ENCODE measurements at regions of chr18 and their contacts with region 1.

Region 1: DNA sequence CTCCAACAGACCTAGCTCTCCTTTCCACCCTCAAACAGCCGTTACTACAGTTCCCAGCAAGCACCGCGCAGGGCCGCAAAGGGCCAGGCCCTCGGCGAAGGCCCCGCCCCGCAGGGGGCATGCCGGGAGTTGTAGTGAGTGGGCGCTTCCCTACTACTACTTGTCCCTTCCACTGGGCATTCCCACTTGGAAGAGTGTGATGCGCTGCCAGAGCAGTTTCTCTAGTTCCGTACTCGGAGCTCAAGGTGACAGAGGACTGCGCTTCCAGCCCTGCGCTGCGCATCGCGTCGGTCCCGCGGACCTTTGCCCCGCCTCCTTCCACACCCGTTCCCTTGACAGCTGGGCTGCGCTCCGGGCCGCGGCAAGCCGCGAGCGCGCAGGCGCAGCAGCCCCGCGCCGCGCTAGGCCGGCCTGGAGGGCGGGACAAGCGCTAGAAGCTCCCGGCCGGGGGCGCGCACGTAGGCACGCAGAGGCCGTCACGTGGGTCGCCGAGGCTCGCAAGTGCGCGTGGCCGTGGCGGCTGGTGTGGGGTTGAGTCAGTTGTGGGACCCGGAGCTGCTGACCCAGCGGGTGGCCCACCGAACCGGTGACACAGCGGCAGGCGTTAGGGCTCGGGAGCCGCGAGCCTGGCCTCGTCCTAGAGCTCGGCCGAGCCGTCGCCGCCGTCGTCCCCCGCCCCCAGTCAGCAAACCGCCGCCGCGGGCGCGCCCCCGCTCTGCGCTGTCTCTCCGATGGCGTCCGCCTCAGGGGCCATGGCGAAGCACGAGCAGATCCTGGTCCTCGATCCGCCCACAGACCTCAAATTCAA is at the start of gene VAPA:
- DNase-seq: peak; percentile 93 to 95
- ATAC-seq: peak; percentile 96 to 99 (median 96)
- H3K4me3 ChIP-seq: peak within 1 kb of the TSS; percentile 79 to 99 (median 94)
- H3K27ac ChIP-seq: peak within 1 kb of the TSS; percentile 91 to 100 (median 99)
- H3K4me1 ChIP-seq: peaks cover 2 to 58% (median 35%) of the 10 kb centered on the region in 9 donors
- H3K27me3 ChIP-seq: no peaks in the 10 kb centered on the region
- CTCF ChIP-seq: no peak
- total RNA-seq, gene VAPA: 202 to 269 (median 237) TPM

Region 2: DNA sequence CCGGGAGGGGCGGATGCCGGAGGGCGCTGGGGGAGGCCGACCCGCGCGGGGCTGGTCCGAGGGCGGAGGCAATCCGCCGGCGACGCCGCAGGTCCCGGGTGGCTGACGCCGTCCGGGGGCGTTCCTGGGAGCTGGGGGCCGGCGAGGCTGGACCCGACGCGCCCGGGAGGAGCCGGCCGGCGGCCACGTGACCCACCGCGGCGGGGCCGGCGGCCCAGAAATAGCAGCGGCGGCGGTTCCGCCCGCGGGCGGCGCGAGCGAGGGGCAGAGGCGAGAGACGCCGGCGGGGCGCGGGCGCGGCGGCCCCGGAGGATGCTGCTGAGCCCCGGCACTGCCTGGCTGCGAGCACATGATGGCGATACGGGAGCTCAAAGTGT is 205.7 kb before region 1 on chr18 and contains the start of gene RAB31:
- intact Hi-C with region 1: loop called in 1 of 10 experiments (anchors 10 kb)
- DNase-seq: peak; percentile 78 to 86
- ATAC-seq: peak; percentile 87 to 97 (median 92)
- H3K4me3 ChIP-seq: peak within 1 kb of the TSS; percentile 23 to 89 (median 78)
- H3K27ac ChIP-seq: peak within 1 kb of the TSS; percentile 75 to 96 (median 88)
- H3K4me1 ChIP-seq: peaks cover 0 to 69% (median 18%) of the 10 kb centered on the region in 9 donors
- H3K27me3 ChIP-seq: no peaks in the 10 kb centered on the region
- CTCF ChIP-seq: no peak
- total RNA-seq, gene RAB31: 12.7 to 47.8 (median 17.0) TPM

Region 3: DNA sequence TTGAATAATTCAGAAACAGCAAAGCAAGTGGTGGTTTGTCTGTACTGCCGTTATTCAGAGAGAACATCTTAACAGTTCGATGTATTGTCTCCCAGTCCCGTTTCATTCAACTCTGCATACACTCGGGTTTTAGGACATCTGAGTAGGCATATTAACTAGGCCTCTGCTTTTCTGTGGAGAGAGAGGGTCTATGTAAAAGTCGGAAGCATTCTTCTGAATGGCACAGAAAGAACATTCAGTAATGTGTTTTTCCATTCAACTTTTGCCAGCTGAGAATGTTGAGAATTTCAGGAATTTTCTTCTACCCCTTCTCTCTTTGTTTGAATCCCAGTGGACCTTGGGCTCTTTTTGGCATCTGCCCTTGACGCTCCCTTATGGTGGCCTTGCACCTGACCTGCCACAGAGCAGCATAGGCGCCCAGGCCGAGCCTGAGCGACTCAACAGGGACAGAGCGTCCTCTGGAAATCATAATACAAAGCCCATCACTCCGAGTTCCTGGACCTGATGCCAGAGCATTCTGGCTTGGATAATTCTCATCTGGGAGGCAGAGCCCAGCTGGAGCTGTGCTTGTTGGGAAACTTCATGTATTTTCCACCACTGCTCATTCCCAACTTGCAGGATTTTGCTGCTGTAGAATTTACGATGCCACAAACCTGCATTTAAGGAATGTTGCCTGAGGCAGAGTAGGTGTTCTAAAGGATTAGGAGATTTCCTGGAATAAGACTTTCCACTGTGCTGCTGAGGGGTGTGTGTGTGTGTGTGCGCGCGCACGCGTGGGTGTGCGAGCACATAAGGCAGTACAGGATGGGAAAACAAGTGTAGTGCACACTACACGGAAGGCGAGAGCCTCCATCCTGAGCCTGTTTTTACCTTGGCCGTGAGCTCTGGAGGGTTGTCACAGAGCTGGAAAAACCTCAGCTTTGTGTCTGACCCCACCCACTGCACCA is 105.2 kb before region 1 on chr18:
- intact Hi-C with region 1: loop called in 4 of 10 experiments (anchors 5 to 10 kb)
- DNase-seq: no peak
- ATAC-seq: peak in 7 of 8 donors; percentile 41 to 87 (median 57)
- H3K4me3 ChIP-seq: peak overlapping the region in 1 of 10 donors; percentile 16
- H3K27ac ChIP-seq: peak overlapping the region; percentile 9 to 80 (median 62)
- H3K4me1 ChIP-seq: peaks cover 15 to 56% (median 45%) of the 10 kb centered on the region in 9 donors
- H3K27me3 ChIP-seq: no peaks in the 10 kb centered on the region
- CTCF ChIP-seq: no peak

Region 4: DNA sequence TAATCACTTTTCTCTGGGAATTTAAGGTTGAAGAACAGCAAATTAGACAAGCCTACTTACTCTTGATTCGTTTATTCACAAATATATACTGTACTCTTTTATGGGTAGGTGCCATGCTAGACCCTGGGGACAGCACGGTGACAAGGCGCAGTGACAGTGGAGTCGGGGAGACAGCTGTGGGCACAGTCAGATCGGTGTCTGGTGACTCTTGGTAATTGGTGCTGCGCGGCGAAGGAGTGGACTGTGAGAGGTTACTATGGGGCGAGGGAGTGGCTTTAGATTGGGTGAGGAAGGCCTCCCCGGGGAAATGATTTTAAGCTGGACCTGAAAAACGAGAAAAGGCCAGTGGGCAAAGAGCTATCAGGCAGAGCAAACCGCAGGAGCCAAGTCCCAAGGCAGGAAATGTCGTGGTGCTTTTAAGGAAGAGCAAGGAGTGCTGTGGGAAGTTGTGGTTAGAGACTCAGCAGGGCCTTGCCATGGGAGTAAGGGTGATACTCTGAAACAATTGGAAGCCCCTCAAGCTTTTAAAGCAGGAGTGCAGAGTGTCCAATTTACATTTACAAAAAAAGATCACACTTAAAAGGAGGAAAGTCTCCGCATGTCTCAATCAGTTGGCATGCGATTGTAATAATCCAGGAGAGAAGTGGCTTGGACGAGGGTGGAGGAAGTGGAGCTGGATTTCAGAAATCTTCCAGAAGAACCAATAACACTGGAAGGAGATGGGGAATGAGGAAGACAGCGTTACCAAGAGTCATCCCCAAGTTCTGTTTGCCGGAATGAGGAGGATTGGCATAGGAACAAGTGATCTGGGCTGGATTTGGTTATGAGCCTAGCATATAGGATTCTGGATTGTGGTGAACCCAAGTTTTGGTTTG is 64.1 kb before region 1 on chr18:
- intact Hi-C with region 1: loop called in 2 of 10 experiments (anchors 10 kb)
- DNase-seq: peak; percentile 43 to 44
- ATAC-seq: peak; percentile 72 to 87 (median 78)
- H3K4me3 ChIP-seq: peak overlapping the region in 1 of 10 donors; percentile 11
- H3K27ac ChIP-seq: peak overlapping the region in 8 of 10 donors; percentile 29 to 84 (median 50)
- H3K4me1 ChIP-seq: peaks cover 6 to 72% (median 32%) of the 10 kb centered on the region in 9 donors
- H3K27me3 ChIP-seq: no peaks in the 10 kb centered on the region
- CTCF ChIP-seq: no peak

Region 5: DNA sequence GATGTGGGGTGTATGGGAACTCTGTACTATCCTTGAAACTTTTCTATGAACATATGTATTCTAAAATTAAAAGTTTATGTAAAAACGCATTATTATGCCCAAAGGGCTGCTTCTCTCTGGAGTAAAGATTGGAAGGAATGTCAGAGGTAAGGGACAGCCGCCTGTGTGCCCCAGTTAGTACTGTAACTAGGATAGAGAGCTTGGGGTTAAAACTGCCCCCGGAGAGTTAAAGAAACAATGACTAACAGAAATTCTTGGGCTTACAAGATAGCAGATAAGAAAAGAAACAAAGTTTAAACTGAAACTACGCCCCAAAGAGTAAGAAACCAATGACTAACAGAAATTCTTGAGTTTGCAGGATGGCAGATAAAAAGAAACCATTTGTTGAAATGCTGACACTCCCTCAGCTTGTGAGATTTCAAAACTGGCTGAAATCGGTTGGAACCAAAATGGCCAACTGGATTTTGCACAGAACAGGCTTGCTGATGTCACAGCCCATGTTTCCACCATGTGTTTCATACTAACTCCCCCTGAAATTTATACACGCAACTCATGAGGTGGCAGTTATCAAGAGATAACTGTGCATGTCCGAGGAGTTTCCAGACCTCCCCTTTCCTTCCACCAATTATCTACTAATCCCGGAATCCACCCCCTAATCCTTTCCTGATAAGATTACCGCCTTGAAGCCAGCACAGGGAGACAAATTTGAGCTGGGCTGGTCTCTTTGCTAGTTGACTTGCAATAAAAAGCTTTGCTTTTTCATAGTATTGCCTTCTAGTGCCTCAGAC is 36.7 kb before region 1 on chr18:
- intact Hi-C with region 1: loop called in 1 of 10 experiments (anchors 2 kb)
- DNase-seq: peak in 1 of 2 donors; percentile 41
- ATAC-seq: peak; percentile 69 to 90 (median 85)
- H3K4me3 ChIP-seq: peak overlapping the region in 7 of 10 donors; percentile 5 to 36 (median 30)
- H3K27ac ChIP-seq: peak overlapping the region in 8 of 10 donors; percentile 27 to 74 (median 60)
- H3K4me1 ChIP-seq: peaks cover 0 to 19% (median 13%) of the 10 kb centered on the region in 9 donors
- H3K27me3 ChIP-seq: no peaks in the 10 kb centered on the region
- CTCF ChIP-seq: no peak

Region 6: DNA sequence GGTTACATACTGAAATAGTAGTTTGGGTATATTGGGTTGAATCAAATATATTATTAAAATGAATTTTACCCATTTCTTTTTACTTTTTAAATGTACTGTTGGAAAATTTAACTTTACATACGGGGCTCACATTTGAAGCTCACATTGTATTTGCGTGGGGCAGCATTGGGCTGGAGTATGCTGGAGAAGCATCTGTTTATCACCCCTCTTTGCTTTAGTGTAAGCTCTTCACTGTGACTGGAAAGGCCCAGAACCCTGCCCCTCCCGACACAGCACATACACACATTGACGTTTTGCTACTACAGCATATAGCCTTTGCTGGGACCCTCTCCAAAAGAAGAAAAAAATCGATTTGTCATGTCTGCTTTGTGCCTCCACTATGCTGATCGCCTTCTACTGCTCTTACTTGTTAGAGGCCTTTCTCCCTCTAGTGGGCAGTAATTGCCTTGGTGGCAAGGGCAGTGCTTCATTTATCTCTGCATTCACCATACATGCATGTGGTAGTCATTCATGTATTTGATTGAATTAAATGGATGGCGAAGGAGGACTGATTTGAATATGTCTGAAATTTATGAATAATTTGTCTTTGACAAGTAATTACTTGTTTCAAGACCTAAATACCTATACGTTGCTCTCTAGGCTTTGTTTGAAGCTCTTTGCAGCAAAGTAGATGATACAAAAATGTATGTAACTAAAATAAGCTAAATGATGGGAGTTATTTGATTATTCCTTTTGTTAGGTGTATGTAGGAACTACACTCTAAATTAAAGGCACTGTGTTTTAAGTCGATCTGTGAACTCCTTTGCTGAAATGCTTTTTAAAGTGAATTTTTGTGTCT is 37.5 kb after region 1 on chr18:
- intact Hi-C with region 1: loop called in 1 of 10 experiments (anchors 5 kb)
- DNase-seq: no peak
- ATAC-seq: peak in 7 of 8 donors; percentile 48 to 80 (median 69)
- H3K4me3 ChIP-seq: no peak overlapping the region
- H3K27ac ChIP-seq: no peak overlapping the region
- H3K4me1 ChIP-seq: peaks cover 0 to 20% (median 0%) of the 10 kb centered on the region in 9 donors
- H3K27me3 ChIP-seq: no peaks in the 10 kb centered on the region
- CTCF ChIP-seq: peak; percentile 30 to 69 (median 60)